ENCODE measurements at regions of chr10 and their contacts with region 1.

Region 1: GRCh38 chr10:117360994-117361667 is 14.1 kb downstream of the PDZD8 start:
- DNase-seq: no peak
- H3K4me3 ChIP-seq: no peak overlapping the region
- H3K27me3 ChIP-seq: no peaks in the 10 kb centered on the region
- CTCF ChIP-seq: no peak

Region 2: GRCh38 chr10:117126034-117126433 is 235.1 kb before region 1 on chr10:
- CTCF ChIA-PET with region 1: no interaction called
- POLR2A ChIA-PET with region 1: no interaction called
- DNase-seq: no peak
- H3K4me3 ChIP-seq: no peak overlapping the region
- H3K27me3 ChIP-seq: peaks cover 3% of the 10 kb centered on the region
- CTCF ChIP-seq: no peak

Region 3: DNA sequence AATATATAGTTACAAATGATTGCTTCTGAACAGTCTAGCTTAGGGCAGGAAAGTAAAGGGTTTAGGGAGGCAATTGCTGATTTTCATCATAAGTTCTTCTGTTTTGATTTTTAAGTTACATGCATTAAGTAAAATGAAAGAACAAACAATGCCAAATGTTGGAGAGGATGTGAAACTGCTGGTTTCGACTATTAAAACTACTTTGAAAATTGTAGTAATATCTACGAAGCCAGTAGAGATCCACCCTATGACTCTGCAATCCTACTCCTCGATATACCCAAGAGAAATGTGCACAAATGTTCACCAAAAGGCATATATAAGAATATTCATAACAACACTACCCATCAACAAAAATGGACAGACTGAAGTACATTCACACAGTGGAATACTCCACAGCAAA is 10.2 kb before region 1 on chr10:
- CTCF ChIA-PET with region 1: interaction called, 11 read pairs
- POLR2A ChIA-PET with region 1: no interaction called
- DNase-seq: no peak
- H3K4me3 ChIP-seq: no peak overlapping the region
- H3K27me3 ChIP-seq: no peaks in the 10 kb centered on the region
- CTCF ChIP-seq: no peak

Region 4: GRCh38 chr10:117391436-117392205 is 30.5 kb after region 1 on chr10:
- CTCF ChIA-PET with region 1: no interaction called
- POLR2A ChIA-PET with region 1: no interaction called
- DNase-seq: no peak
- H3K4me3 ChIP-seq: no peak overlapping the region
- H3K27me3 ChIP-seq: peaks cover 6% of the 10 kb centered on the region
- CTCF ChIP-seq: no peak

Region 5: GRCh38 chr10:117663750-117664149 is 302.6 kb after region 1 on chr10:
- CTCF ChIA-PET with region 1: no interaction called
- POLR2A ChIA-PET with region 1: no interaction called
- DNase-seq: peak; percentile 78
- H3K4me3 ChIP-seq: no peak overlapping the region
- H3K27me3 ChIP-seq: no peaks in the 10 kb centered on the region
- CTCF ChIP-seq: no peak

Measured in BJ (cell line).